Caco-2 (cell line): ENCODE measurements at regions of chr20 and their contacts with region 1.

Region 1: DNA sequence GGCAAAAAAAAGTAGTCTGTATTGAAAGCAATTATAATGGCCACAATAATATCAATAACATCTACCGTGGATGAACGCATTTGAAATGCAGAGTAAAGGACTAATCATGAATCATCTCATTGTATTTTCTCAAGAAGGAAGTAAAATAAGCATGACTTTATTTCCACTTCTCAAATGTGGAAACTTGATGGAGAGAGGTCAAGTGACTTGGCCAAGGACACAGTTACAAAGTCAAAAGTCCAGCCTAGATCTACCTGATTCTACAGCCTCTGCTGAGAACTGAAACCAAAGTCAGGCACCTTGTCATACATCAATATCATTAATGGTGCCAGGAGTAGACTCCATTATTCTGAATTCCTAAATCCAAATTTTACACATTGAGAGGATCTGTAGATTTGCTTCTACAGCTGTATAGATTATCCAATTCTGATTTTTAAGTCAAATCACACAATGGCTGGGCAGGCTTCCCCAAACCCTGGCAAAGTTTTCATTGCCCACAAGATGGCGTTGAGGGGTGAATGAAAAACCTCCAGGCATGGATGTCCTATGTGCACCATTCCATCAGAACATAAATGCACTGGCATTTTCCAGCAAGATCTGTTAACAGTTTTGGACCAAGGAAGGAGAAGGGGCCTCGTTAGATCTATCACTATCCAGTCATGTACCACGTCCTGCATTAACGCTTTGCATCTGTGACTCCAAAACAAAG is 423.1 kb downstream of the MAFB start:
- DNase-seq: peak in 1 of 2 experiments; percentile 66
- H3K4me3 ChIP-seq: no peak overlapping the region
- H3K4me3 Mint-ChIP-seq: no peak overlapping the region
- H3K27ac Mint-ChIP-seq: no peak overlapping the region
- H3K4me1 ChIP-seq: no peaks in the 10 kb centered on the region
- H3K4me1 Mint-ChIP-seq: no peaks in the 10 kb centered on the region
- H3K27me3 ChIP-seq: peaks cover 2% of the 10 kb centered on the region
- H3K27me3 Mint-ChIP-seq: peaks cover 21% of the 10 kb centered on the region
- CTCF ChIP-seq: peak; percentile 72 to 81

Region 2: GRCh38 chr20:40397483-40397882 is 131.5 kb after region 1 on chr20:
- CTCF ChIA-PET with region 1: no interaction called
- POLR2A ChIA-PET with region 1: no interaction called
- intact Hi-C with region 1: no loop called
- DNase-seq: no peak
- H3K4me3 ChIP-seq: no peak overlapping the region
- H3K4me3 Mint-ChIP-seq: no peak overlapping the region
- H3K27ac Mint-ChIP-seq: no peak overlapping the region
- H3K4me1 ChIP-seq: no peaks in the 10 kb centered on the region
- H3K4me1 Mint-ChIP-seq: no peaks in the 10 kb centered on the region
- H3K27me3 ChIP-seq: no peaks in the 10 kb centered on the region
- H3K27me3 Mint-ChIP-seq: no peaks in the 10 kb centered on the region
- CTCF ChIP-seq: no peak

Region 3: DNA sequence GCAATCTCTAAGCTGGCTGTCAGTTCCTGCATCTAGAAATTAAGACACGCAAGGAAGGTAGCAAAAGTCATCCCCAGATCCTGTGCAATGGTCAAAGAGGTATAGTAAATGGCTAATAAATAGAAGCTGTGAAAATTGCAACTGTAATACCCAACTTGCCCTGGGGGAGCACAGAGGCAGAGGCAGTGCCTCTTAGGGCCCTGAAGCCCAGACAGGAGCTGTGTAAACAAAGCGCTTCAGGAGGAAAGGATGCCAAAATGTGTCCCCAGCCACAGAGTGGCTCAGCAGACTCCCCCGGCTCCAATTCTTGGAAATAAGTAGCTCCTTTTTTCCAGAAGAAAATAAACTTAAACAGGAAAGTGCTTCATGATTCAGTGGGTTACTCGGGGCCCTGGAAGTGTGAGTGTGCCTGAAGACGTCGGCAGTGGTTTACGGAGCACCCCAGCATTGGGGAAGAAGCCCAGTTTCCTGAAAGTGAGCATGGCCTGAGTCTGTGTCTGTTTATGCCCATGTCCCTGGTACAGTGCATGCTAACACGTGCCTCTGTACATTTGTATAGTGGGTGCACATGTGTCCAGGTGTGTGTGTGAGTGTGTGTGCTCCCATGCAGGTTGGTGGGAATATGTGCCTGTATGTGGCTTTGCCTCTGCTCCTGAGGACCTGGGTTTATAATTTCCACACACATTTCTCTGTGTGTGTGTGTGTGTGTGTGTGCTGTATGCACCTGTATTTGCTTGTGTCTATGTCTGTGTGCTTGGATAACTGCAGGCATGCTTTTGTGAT is 176.4 kb after region 1 on chr20:
- CTCF ChIA-PET with region 1: no interaction called
- POLR2A ChIA-PET with region 1: no interaction called
- intact Hi-C with region 1: loop called (anchors 10 kb)
- DNase-seq: peak in 1 of 2 experiments; percentile 52
- H3K4me3 ChIP-seq: no peak overlapping the region
- H3K4me3 Mint-ChIP-seq: no peak overlapping the region
- H3K27ac Mint-ChIP-seq: no peak overlapping the region
- H3K4me1 ChIP-seq: no peaks in the 10 kb centered on the region; the same call in 1 of the 2 replicates
- H3K4me1 Mint-ChIP-seq: no peaks in the 10 kb centered on the region
- H3K27me3 ChIP-seq: no peaks in the 10 kb centered on the region; the same call in 1 of the 2 replicates
- H3K27me3 Mint-ChIP-seq: no peaks in the 10 kb centered on the region
- CTCF ChIP-seq: peak; percentile 48 to 56

Region 4: GRCh38 chr20:40471261-40471629 is 205.3 kb after region 1 on chr20:
- CTCF ChIA-PET with region 1: interaction called, 3 read pairs
- POLR2A ChIA-PET with region 1: no interaction called
- intact Hi-C with region 1: loop called (anchors 1 kb)
- DNase-seq: peak; percentile 47 to 64
- H3K4me3 ChIP-seq: no peak overlapping the region
- H3K4me3 Mint-ChIP-seq: no peak overlapping the region
- H3K27ac Mint-ChIP-seq: no peak overlapping the region
- H3K4me1 ChIP-seq: peaks cover 6% of the 10 kb centered on the region
- H3K4me1 Mint-ChIP-seq: peaks cover 2% of the 10 kb centered on the region
- H3K27me3 ChIP-seq: no peaks in the 10 kb centered on the region
- H3K27me3 Mint-ChIP-seq: no peaks in the 10 kb centered on the region
- CTCF ChIP-seq: peak; percentile 19 to 28

Region 5: GRCh38 chr20:40565681-40566040 is 299.7 kb after region 1 on chr20:
- CTCF ChIA-PET with region 1: interaction called, 5 read pairs
- POLR2A ChIA-PET with region 1: no interaction called
- intact Hi-C with region 1: loop called (anchors 1 kb)
- DNase-seq: no peak
- H3K4me3 ChIP-seq: no peak overlapping the region
- H3K4me3 Mint-ChIP-seq: no peak overlapping the region
- H3K27ac Mint-ChIP-seq: no peak overlapping the region
- H3K4me1 ChIP-seq: no peaks in the 10 kb centered on the region
- H3K4me1 Mint-ChIP-seq: no peaks in the 10 kb centered on the region
- H3K27me3 ChIP-seq: peaks cover 2% of the 10 kb centered on the region; the same call in 1 of the 2 replicates
- H3K27me3 Mint-ChIP-seq: no peaks in the 10 kb centered on the region
- CTCF ChIP-seq: no peak